GM12878 (cell line): ENCODE measurements at regions of chrX and their contacts with region 1.

Region 1: DNA sequence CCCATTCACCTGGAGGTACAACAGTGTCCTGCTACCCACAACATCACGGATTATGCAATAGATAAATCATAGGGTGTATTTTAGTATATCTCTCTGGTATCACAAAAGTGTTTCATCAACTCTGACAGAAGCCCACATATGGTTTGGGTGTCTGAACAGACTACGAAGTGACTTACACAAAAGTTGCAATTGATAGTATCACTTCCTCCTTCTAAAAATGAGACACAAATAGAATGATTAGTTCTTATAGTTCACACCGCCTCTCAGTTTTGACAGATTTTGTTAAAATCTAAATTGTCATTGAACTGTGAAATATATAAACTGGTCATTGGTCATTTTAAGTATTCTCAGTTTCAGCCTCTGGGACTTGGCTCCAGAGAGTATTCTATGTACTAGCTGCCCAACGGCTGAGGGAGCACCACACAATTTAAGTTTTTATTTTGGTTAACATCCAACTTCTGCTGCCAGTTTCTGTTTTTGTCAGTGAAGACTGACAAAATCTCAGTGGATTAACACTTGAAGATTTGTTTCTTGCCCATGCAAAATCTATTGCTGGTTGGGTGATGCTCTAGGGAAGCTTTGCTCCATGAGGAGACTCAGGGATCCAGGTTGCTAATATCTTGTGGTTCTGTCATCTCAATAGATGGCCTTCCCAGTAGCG is 113.8 kb upstream of the PUDP start:
- DNase-seq: peak; percentile 57
- ATAC-seq: peak; percentile 92
- H3K4me3 ChIP-seq: no peak overlapping the region
- H3K27ac ChIP-seq: peak overlapping the region; percentile 13; the same call in 1 of the 2 replicates
- H3K4me1 ChIP-seq: peaks cover 18% of the 10 kb centered on the region
- H3K27me3 ChIP-seq: no peaks in the 10 kb centered on the region
- CTCF ChIP-seq: no peak
- EP300 ChIP-seq: peak; percentile 92 to 96
- POLR2A ChIP-seq: no peak
- RAD21 ChIP-seq: no peak

Region 2: DNA sequence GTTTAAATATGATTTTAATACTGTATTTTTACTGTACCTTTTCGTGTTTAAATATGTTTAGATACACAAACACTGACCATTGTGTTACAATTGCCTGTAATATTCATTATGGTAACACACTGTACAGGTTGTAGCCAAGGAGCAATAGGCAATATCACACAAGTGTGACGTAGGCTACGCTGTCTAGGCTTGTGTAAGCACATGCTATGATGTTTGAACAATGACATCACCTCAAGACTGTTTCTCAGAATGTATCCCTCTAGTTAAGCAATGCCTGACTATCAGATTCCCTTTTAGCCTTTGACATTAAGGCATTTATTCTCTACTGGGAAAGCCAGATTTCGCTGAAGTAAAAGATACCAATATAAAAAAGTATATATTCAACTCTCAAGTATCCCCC is 793.1 kb before region 1 on chrX:
- CTCF ChIA-PET with region 1: no interaction called
- POLR2A ChIA-PET with region 1: no interaction called
- RAD21 ChIA-PET with region 1: no interaction called
- SMC1A ChIA-PET with region 1: no interaction called
- in situ Hi-C with region 1: no loop called
- intact Hi-C with region 1: no loop called
- DNase-seq: no peak
- ATAC-seq: no peak
- H3K4me3 ChIP-seq: no peak overlapping the region
- H3K27ac ChIP-seq: no peak overlapping the region
- H3K4me1 ChIP-seq: no peaks in the 10 kb centered on the region
- H3K27me3 ChIP-seq: no peaks in the 10 kb centered on the region
- CTCF ChIP-seq: no peak
- EP300 ChIP-seq: no peak
- POLR2A ChIP-seq: no peak
- RAD21 ChIP-seq: no peak

Region 3: DNA sequence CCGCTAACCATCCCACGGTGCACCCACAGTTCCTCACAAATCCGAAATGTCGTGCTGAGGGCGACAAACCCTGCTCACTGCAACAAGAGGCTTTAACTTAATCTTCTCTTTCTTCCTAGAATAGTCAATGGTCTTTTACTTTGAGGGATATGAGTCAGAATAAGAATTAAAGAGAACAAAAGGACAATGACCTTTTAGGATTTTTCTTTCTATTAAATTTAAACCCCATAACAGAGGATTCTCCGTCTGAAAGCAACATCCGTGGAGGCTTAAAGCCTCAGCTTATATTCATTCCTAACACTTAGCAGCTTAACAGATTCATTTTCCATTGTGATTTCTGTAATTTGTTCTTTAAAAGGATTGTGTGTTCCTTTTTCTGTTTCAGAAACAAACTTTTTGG is 68.9 kb before region 1 on chrX:
- CTCF ChIA-PET with region 1: no interaction called
- POLR2A ChIA-PET with region 1: no interaction called
- RAD21 ChIA-PET with region 1: no interaction called
- SMC1A ChIA-PET with region 1: no interaction called
- in situ Hi-C with region 1: no loop called
- intact Hi-C with region 1: no loop called
- DNase-seq: no peak
- ATAC-seq: no peak
- H3K4me3 ChIP-seq: no peak overlapping the region
- H3K27ac ChIP-seq: no peak overlapping the region
- H3K4me1 ChIP-seq: no peaks in the 10 kb centered on the region
- H3K27me3 ChIP-seq: no peaks in the 10 kb centered on the region
- CTCF ChIP-seq: no peak
- EP300 ChIP-seq: no peak
- POLR2A ChIP-seq: no peak
- RAD21 ChIP-seq: no peak

Region 4: DNA sequence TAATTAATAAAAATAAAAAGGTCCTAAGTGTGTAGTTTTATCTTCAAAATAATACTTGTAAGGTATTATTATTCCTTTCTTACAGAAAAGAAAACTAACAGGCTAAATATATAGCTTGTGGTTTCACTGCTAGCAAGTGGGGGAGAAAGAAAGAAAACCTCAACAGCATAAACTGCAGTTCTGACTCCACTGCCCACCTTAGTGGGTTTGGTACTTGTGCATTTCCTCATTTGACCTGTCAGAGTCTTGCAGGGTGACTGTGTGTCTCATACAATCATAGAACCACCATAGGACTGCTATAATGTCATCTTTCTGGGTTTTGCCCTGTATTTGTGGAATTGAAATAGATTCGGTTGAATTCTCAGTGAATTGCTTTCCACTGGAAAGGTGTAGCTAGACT is 19.2 kb before region 1 on chrX:
- CTCF ChIA-PET with region 1: interaction called, 5 read pairs
- POLR2A ChIA-PET with region 1: no interaction called
- RAD21 ChIA-PET with region 1: interaction called, 6 read pairs
- SMC1A ChIA-PET with region 1: interaction called, 12 read pairs
- in situ Hi-C with region 1: no loop called
- intact Hi-C with region 1: no loop called
- DNase-seq: peak; percentile 40
- ATAC-seq: peak; percentile 98
- H3K4me3 ChIP-seq: no peak overlapping the region
- H3K27ac ChIP-seq: no peak overlapping the region
- H3K4me1 ChIP-seq: peaks cover 11% of the 10 kb centered on the region
- H3K27me3 ChIP-seq: no peaks in the 10 kb centered on the region
- CTCF ChIP-seq: no peak
- EP300 ChIP-seq: peak; percentile 81 to 86; a peak in 3 of 4 replicates
- POLR2A ChIP-seq: no peak
- RAD21 ChIP-seq: 0 out of 2 replicates have a peak, but pooled peaks have one; percentile 19

Region 5: DNA sequence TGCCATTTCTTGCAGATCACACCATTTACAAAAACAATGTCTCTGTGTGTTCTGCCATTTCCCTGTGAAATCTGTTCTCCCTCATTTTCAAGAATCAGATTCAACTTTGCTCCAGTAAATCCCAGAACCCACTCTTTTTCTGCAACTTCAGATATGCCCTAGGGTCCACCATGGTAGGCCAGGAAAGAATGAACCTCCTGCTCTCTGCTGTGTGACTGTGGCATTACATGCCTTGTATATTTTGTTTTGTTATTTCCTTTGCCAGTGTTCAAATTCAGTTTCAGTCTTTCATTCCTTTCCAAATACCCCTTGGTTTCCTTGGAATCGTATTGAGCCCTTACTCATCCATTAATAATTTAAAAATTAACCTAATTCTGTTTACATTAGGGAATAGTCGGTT is 291.0 kb after region 1 on chrX:
- CTCF ChIA-PET with region 1: no interaction called
- POLR2A ChIA-PET with region 1: no interaction called
- RAD21 ChIA-PET with region 1: no interaction called
- SMC1A ChIA-PET with region 1: no interaction called
- in situ Hi-C with region 1: no loop called
- intact Hi-C with region 1: no loop called
- DNase-seq: no peak
- ATAC-seq: no peak
- H3K4me3 ChIP-seq: no peak overlapping the region
- H3K27ac ChIP-seq: no peak overlapping the region
- H3K4me1 ChIP-seq: no peaks in the 10 kb centered on the region
- H3K27me3 ChIP-seq: no peaks in the 10 kb centered on the region
- CTCF ChIP-seq: no peak; a peak in 1 of 6 replicates
- EP300 ChIP-seq: no peak
- POLR2A ChIP-seq: no peak
- RAD21 ChIP-seq: peak; percentile 50